Calu3 (cell line): ENCODE measurements at regions of chr1 and their contacts with region 1.

Region 1: GRCh38 chr1:151156515-151156819 is at the start of gene TNFAIP8L2:
- DNase-seq: no peak
- H3K4me3 Mint-ChIP-seq: no peak within 1 kb of the TSS
- H3K27ac Mint-ChIP-seq: no peak within 1 kb of the TSS
- H3K4me1 Mint-ChIP-seq: no peaks in the 10 kb centered on the region
- H3K27me3 Mint-ChIP-seq: no peaks in the 10 kb centered on the region
- CTCF ChIP-seq: no peak
- total RNA-seq, gene TNFAIP8L2: not detected in 2 replicates

Region 2: DNA sequence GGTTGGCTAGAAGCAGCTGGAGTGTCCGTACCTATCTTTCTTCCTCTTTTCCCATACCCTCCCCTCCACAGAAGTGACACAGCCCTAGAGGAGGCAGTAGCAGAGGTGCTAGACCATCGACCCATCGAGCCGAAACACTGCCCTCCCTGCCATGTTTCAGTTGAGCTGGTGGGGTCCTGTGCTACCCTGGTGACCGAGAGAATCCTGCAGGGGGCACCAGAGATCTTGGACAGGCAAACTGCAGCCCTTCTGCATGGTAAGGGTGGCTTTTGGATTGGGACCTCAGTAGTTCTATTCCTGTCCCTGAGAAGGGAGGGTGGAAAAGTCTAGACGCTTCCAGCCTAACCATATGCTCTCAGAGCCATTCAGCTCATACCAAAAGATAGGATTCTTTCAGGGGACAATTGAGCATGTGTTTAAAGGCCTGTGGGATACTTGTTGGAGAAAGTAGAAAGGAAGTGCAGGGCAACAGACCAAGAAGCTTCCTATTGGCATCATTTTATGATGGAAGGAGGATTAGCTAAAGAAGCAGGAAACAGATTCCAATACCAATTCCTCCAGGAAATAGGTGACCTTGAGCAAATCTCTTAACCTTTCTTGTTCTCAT is 131.8 kb before region 1 on chr1:
- CTCF ChIA-PET with region 1: no interaction called
- intact Hi-C with region 1: loop called (anchors 2 kb)
- DNase-seq: peak; percentile 83
- H3K4me3 Mint-ChIP-seq: no peak overlapping the region
- H3K27ac Mint-ChIP-seq: no peak overlapping the region
- H3K4me1 Mint-ChIP-seq: no peaks in the 10 kb centered on the region
- H3K27me3 Mint-ChIP-seq: no peaks in the 10 kb centered on the region
- CTCF ChIP-seq: peak; percentile 69